Calu3 (cell line): ENCODE measurements at regions of chr2 and their contacts with region 1.

Region 1: GRCh38 chr2:234974501-234975385 is 22.9 kb downstream of the SH3BP4 start:
- DNase-seq: no peak
- H3K4me3 Mint-ChIP-seq: no peak overlapping the region
- H3K27ac Mint-ChIP-seq: peak overlapping the region; percentile 33
- H3K4me1 Mint-ChIP-seq: peaks cover 59% of the 10 kb centered on the region
- H3K27me3 Mint-ChIP-seq: no peaks in the 10 kb centered on the region
- CTCF ChIP-seq: no peak

Region 2: DNA sequence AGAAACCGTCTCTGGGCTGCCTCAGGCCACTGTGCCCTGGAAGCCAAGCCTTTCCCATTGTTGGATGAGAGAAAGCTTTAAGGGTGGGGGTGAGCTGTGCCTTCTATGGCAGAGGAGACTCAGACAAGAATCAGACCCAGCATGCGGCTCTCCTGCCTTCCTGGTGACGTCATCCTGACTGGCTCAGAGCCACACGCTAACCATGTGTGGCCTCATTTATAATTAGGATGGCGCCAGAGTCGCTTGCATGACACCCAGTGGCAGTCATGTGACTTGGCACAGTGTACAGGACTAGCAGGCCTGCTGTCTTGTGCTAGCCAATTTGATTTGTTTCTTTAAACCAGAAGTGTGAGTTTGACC is 76.2 kb after region 1 on chr2:
- CTCF ChIA-PET with region 1: interaction called, 3 read pairs
- intact Hi-C with region 1: loop called (anchors 5 kb)
- DNase-seq: peak; percentile 91
- H3K4me3 Mint-ChIP-seq: peak overlapping the region; percentile 41
- H3K27ac Mint-ChIP-seq: peak overlapping the region; percentile 59
- H3K4me1 Mint-ChIP-seq: peaks cover 64% of the 10 kb centered on the region
- H3K27me3 Mint-ChIP-seq: no peaks in the 10 kb centered on the region
- CTCF ChIP-seq: no peak

Region 3: DNA sequence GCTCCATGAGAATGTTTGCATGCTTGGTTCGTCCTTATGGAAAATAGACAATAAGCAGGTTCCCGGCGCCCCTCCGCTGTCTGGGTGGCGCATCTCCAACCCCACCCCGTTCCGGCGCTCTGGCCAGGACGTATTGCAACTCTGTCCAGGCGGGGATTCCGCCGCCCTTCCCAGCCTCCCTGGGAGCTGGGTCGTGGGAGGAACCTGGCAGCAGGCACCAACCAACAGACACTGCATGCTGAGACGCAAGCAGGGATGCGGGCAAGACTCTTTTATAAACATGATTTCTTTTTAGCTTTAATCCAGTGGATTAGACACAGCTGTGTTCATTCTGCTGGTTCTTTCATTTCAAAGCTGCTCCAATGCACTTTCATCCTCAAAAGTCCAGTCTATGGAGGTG is 217.2 kb after region 1 on chr2:
- CTCF ChIA-PET with region 1: no interaction called
- intact Hi-C with region 1: no loop called
- DNase-seq: no peak
- H3K4me3 Mint-ChIP-seq: no peak overlapping the region
- H3K27ac Mint-ChIP-seq: no peak overlapping the region
- H3K4me1 Mint-ChIP-seq: no peaks in the 10 kb centered on the region
- H3K27me3 Mint-ChIP-seq: peaks cover 69% of the 10 kb centered on the region
- CTCF ChIP-seq: no peak